Left cardiac atrium (tissue), 4 donors: ENCODE measurements at regions of chr12 and their contacts with region 1.

Region 1: GRCh38 chr12:108457006-108457733 is 57.9 kb upstream of the FICD start:
- DNase-seq: no peak
- ATAC-seq: peak; percentile 38 to 75

Region 2: DNA sequence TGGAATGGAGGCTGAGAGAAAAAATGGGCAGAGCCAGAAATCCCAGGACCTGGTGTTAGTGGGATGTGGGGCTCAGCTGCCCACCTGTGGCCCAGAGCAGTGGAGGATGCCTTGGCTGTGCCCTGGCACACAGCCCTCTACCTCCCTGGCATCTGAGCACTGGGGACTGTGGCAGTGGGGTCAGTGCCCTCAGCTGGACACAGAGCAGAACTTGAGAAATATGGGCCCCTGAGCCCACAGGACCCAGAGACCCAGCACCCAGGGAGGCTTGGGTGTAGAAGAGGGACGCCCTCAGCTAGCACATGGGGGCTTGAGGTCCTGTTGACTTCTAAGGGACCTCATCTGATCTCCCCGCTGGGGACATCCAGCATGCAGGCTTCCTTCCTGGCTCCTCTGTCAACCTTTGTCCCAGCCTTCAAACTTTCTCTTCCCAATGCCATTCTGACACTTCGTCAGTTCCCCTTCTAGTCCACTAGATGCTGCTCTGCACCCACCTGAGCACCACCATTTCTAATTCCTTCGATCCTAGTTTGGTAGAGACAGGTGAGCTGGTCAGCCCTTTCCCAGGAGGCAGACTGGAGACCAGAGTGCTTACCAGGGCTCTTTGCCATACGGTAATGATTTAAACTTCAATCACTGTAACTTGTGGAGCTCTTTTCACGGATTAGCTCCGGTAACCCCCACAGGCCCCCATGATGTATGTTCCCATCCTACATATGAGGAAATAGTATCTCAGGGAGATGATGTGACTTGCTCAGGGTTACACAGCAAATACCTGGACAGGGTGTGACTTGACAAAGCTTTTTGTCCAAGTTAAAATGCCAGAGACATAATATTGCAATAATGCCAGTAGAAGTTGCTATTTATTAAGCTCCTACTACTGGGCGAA is 539.0 kb before region 1 on chr12:
- intact Hi-C with region 1: loop called in 1 of 2 experiments (anchors 5 kb)
- DNase-seq: no peak
- ATAC-seq: no peak

Region 3: GRCh38 chr12:108234158-108234557 is 223.0 kb before region 1 on chr12:
- intact Hi-C with region 1: loop called in 1 of 2 experiments (anchors 10 kb)
- DNase-seq: no peak
- ATAC-seq: peak in 1 of 2 donors; percentile 61